WTC11 (cell line): ENCODE measurements at regions of chr18 and their contacts with region 1.

Region 1: GRCh38 chr18:50806208-50806616 is 13.6 kb downstream of the MRO start:
- DNase-seq: no peak
- ATAC-seq: peak; percentile 67
- H3K4me3 Mint-ChIP-seq: no peak overlapping the region
- H3K27ac Mint-ChIP-seq: no peak overlapping the region
- H3K4me1 Mint-ChIP-seq: peaks cover 29% of the 10 kb centered on the region
- H3K27me3 Mint-ChIP-seq: no peaks in the 10 kb centered on the region
- CTCF ChIP-seq: no peak

Region 2: DNA sequence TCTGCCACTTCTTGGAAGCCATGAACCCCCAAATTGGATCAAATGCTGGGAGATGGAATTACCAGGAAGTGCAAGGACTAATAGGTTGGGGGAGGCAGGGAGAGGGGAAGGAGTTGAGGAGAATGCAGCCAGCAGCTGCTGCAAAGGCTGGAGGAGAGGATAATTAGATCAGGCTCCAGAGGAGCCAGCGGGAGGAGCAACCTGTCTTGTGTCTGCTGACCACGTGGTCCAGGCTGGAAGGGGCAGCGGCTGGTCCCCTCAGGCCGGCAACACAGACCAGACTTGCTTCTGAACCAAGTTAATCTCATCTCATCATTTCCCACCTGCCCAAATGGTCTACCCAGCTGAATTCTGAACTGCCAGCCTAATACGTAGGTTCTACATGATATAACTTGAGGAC is 54.7 kb before region 1 on chr18:
- CTCF ChIA-PET with region 1: no interaction called
- POLR2A ChIA-PET with region 1: no interaction called
- DNase-seq: no peak
- ATAC-seq: no peak
- H3K4me3 Mint-ChIP-seq: no peak overlapping the region
- H3K27ac Mint-ChIP-seq: no peak overlapping the region
- H3K4me1 Mint-ChIP-seq: peaks cover 28% of the 10 kb centered on the region
- H3K27me3 Mint-ChIP-seq: peaks cover 2% of the 10 kb centered on the region; the same call in 1 of the 2 replicates
- CTCF ChIP-seq: no peak

Region 3: GRCh38 chr18:50819728-50820378 is 13.6 kb after region 1 on chr18 and contains the start of gene MRO:
- CTCF ChIA-PET with region 1: interaction called, 11 read pairs
- POLR2A ChIA-PET with region 1: interaction called, 4 read pairs
- DNase-seq: peak; percentile 85
- ATAC-seq: peak; percentile 86
- H3K4me3 Mint-ChIP-seq: no peak within 1 kb of the TSS
- H3K27ac Mint-ChIP-seq: no peak within 1 kb of the TSS
- H3K4me1 Mint-ChIP-seq: peaks cover 24% of the 10 kb centered on the region
- H3K27me3 Mint-ChIP-seq: peaks cover 2% of the 10 kb centered on the region; the same call in 1 of the 2 replicates
- CTCF ChIP-seq: peak; percentile 90
- total RNA-seq, gene MRO: 0.71 to 2.1 TPM (median 1.1 TPM) in 3 replicates

Region 4: DNA sequence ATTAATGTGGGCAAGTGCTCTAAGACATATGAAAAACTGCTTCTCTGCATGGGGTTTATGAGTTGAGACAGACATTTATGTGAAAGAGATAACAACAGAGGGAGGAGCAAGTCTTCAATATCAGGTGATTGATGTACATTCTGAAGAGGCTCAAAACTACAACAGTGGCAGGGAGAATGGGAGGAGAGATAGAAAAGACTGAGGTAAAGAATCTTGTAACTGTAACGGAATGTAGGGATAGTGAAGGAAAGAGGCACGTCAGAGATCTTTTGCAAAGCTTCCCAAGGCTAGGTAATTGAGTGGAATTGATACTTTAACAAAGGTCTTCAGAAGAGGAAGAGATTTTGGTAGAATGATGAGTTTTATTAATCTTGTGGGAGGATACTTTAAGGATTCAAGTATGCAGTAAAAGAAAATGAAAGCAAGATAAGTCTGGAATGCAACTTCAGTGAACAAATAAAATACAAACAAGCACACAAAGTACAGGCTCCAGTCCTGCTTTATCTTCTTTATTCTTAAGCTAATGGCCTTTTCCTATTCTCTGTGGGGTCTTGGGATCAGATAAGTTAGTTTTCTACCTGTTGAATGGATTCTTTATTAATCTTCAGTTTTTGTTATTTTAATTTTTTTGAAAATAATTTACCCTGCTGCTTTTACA is 238.8 kb after region 1 on chr18:
- CTCF ChIA-PET with region 1: no interaction called
- POLR2A ChIA-PET with region 1: no interaction called
- DNase-seq: no peak
- ATAC-seq: no peak; the same call in 1 of the 2 replicates
- H3K4me3 Mint-ChIP-seq: no peak overlapping the region
- H3K27ac Mint-ChIP-seq: peak overlapping the region; percentile 58
- H3K4me1 Mint-ChIP-seq: peaks cover 69% of the 10 kb centered on the region
- H3K27me3 Mint-ChIP-seq: no peaks in the 10 kb centered on the region
- CTCF ChIP-seq: no peak